A549 (cell line): ENCODE measurements at regions of chr4 and their contacts with region 1.

Region 1: GRCh38 chr4:77600521-77601451 is 4.8 kb upstream of the CXCL13 start:
- DNase-seq: peak; percentile 34 to 42
- ATAC-seq: peak in 1 of 2 experiments; percentile 69; a peak in 3 of 6 replicates
- H3K4me3 ChIP-seq: no peak overlapping the region
- H3K27ac ChIP-seq: no peak overlapping the region
- H3K4me1 ChIP-seq: no peaks in the 10 kb centered on the region
- CTCF ChIP-seq: peak; percentile 66
- EP300 ChIP-seq: no peak
- POLR2A ChIP-seq: no peak
- RAD21 ChIP-seq: peak; percentile 68 to 69

Region 2: DNA sequence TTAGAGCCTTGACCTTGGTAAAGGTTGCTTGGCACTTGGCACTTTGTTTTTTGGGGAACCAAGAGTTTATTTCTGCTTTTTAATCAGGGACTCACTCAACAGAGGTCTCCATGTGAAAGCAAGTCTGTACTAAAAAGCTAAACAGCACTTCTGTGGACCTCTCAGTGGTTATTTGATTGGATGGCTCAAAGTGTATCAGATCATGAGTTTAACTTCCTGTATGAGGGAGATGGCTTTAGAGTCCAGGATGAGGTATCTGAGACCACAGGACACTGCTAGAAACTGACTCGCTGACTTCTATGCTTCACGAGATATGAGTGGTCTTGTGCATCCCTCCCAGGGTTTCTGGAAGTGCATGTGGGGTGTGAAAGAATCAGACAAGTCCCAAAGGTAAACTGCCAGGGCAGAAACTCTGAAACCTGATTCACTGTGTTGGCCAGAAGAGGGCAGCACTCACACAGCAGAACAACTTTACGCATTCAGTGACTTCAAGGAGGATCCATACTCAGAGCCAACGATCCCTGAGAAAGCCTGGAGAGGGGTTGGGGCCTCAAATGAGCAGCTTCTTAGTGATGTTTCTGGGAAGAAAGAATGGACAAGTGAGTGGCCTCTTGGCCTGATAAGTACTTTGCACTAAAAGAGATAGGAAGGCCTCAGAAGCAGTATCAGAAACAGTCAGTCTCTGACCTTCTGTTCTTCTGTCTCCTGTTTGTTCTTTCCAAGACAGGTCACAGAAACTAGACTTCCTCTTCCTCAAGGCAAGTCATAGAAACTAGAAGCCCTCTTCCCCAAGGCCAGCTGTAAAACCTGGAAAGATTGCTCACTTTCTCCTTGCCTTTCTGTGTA is 215.4 kb before region 1 on chr4:
- CTCF ChIA-PET with region 1: interaction called, 21 read pairs
- POLR2A ChIA-PET with region 1: no interaction called
- DNase-seq: peak; percentile 20 to 53
- ATAC-seq: peak; percentile 84 to 92; a peak in 5 of 6 replicates
- H3K4me3 ChIP-seq: no peak overlapping the region
- H3K27ac ChIP-seq: no peak overlapping the region
- H3K4me1 ChIP-seq: no peaks in the 10 kb centered on the region
- CTCF ChIP-seq: peak; percentile 67
- EP300 ChIP-seq: no peak
- POLR2A ChIP-seq: no peak
- RAD21 ChIP-seq: peak; percentile 74

Region 3: GRCh38 chr4:77613267-77613666 is 12.5 kb after region 1 on chr4:
- CTCF ChIA-PET with region 1: interaction called, 12 read pairs
- POLR2A ChIA-PET with region 1: no interaction called
- DNase-seq: no peak
- ATAC-seq: no peak
- H3K4me3 ChIP-seq: no peak overlapping the region
- H3K27ac ChIP-seq: no peak overlapping the region
- H3K4me1 ChIP-seq: no peaks in the 10 kb centered on the region
- CTCF ChIP-seq: no peak
- EP300 ChIP-seq: no peak
- POLR2A ChIP-seq: no peak
- RAD21 ChIP-seq: no peak

Region 4: GRCh38 chr4:77618383-77619122 is 17.8 kb after region 1 on chr4:
- CTCF ChIA-PET with region 1: interaction called, 10 read pairs
- POLR2A ChIA-PET with region 1: no interaction called
- DNase-seq: peak; percentile 59 to 64
- ATAC-seq: peak; percentile 98 to 100
- H3K4me3 ChIP-seq: no peak overlapping the region
- H3K27ac ChIP-seq: peak overlapping the region in 1 of 2 experiments; percentile 69; a peak in 3 of 6 replicates
- H3K4me1 ChIP-seq: no peaks in the 10 kb centered on the region
- CTCF ChIP-seq: peak; percentile 65
- EP300 ChIP-seq: no peak
- POLR2A ChIP-seq: no peak
- RAD21 ChIP-seq: peak; percentile 66 to 68